SK-MEL-5 (cell line): ENCODE measurements at regions of chr2 and their contacts with region 1.

Region 1: GRCh38 chr2:159615140-159615951 is 1.0 kb downstream of the BAZ2B start:
- DNase-seq: peak; percentile 94

Region 2: GRCh38 chr2:159712143-159712928 is 97.0 kb after region 1 on chr2 and contains the start of gene MARCHF7:
- in situ Hi-C with region 1: loop called (anchors 25 kb)
- DNase-seq: peak; percentile 94
- total RNA-seq, gene MARCHF7: 76.6 and 81.9 TPM in 2 replicates